Endothelial cell of umbilical vein (primary cell): ENCODE measurements at regions of chr20 and their contacts with region 1.

Region 1: DNA sequence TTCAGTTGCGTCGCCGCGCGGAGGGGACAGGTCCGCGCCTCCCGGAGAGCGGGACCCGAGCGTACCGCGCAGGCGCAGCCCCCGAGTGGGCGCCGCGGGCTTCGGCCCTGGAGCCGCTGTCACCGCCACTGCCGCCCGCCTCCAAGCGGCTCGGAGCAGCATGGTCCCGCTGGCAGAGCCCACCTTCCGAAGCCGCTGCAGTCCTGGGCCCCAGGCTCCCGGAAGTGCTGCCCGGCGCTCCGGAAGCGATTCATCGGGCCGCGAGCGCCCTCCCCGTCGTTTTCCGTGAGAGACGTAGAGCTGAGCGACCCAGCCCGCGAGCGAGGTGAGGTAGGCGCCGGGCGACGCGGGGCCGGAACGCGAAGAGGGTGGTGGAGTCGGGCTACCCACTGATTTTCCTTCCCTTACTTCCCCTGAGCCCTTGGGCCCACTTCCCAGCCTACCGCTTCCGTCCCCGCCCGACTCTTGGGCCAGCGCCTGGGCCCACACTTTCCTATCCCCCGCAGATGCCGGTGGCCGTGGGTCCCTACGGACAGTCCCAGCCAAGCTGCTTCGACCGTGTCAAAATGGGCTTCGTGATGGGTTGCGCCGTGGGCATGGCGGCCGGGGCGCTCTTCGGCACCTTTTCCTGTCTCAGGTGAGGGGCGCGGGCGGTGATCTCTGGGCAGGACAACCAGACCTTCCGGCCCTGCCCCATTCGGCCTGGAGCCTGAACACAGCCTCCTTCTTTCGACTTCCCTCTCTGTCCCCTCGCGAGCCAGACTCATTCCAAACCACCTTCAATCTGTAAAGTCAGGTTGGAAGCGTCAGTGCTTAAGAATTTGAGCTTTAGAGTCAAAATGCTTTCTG is at the starts of genes NFS1 and ROMO1:
- DNase-seq: peak; percentile 89
- H3K4me3 ChIP-seq: peak within 1 kb of the TSS; percentile 44 to 91 (median 87)
- H3K27ac ChIP-seq: peak within 1 kb of the TSS; percentile 65
- H3K4me1 ChIP-seq: peaks cover 17% of the 10 kb centered on the region
- H3K27me3 ChIP-seq: no peaks in the 10 kb centered on the region
- CTCF ChIP-seq: peak; percentile 14 to 43
- POLR2A ChIP-seq: peak; percentile 95
- total RNA-seq, gene NFS1: 24.0 and 25.1 TPM in 2 replicates
- total RNA-seq, gene ROMO1: 169 and 174 TPM in 2 replicates

Region 2: DNA sequence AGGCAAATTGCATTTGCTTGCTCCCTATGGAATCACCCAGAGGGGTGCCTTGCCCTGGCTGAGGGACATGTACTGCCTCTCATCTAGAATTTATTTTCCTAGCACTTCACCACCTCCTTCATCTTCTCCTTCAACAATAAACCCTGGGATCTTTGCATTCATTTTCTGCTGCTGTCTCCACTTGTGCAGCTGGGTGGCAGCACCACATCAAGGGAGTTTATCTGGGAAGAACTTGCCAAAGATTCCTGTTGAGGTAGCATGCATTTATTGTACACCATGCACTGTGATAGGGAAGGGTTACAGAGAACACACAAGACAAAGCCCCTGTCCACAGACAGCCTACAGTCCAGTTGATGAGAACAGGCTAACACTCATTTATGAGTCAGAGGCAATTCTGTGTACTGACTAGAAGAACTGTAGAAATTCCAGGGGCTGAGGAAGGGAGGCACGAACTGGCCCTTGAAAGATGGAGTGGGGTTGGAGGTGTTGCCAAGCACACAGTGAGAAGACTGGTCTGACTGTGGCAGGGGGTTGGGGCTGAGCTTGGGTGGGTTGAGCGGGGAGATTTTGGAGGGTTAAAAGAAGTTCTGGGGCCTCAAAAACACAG is 187.4 kb before region 1 on chr20:
- CTCF ChIA-PET with region 1: interaction called, 3 read pairs
- POLR2A ChIA-PET with region 1: no interaction called
- dilution Hi-C with region 1: no loop called
- intact Hi-C with region 1: loop called (anchors 10 kb)
- DNase-seq: peak; percentile 56
- H3K4me3 ChIP-seq: no peak overlapping the region
- H3K27ac ChIP-seq: no peak overlapping the region
- H3K4me1 ChIP-seq: no peaks in the 10 kb centered on the region
- H3K27me3 ChIP-seq: no peaks in the 10 kb centered on the region
- CTCF ChIP-seq: peak; percentile 41 to 52
- POLR2A ChIP-seq: no peak

Region 3: DNA sequence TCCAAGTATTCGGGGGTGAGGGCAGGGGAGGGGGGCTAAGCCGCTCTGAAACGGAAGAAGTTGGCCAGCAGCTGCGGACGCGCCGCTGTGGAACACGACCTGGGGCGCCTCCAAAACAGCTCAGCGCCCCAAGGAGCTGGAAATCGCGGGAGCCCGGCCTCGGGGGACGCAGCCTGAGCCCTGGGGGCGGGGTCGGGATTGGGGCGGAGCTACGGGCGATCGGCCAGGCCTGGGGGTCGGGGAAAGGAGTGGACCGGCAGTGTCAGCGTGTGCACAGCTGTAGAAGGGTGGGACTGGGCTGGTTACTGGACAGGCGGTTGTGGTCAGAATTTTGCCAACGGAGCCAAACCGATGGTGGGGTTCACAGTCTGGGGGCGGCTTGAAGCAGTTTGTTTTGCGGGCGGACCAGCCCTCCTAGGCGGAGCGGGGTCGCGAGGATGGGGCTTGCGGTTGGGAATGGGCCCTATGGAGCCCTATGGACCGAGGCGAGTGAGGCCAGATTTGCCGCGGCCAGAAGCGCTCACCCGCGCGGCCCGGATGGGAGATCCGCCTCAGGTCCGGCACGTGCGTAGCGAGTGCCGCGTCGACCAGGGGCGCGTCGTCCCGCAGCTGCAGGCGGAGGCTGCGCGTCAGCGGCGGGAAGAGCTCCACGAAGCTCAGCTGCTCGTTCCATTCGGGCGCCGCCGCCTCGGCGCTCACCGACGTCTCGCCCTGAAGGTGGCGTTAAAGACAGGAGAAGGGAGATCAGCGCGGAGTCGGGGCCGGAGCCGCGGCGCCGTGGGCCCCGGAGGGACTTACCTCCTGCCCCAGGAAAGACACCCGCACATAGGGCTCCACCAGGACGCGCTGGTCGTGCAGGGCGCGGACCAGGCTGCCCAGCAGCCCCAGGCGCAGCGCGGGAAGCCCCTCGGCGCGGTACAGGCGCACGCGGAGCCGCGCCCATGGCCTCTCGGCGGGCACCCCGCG is 98.1 kb before region 1 on chr20:
- CTCF ChIA-PET with region 1: interaction called, 3 read pairs
- POLR2A ChIA-PET with region 1: no interaction called
- dilution Hi-C with region 1: no loop called
- intact Hi-C with region 1: loop called (anchors 5 kb)
- DNase-seq: peak; percentile 79
- H3K4me3 ChIP-seq: peak overlapping the region; percentile 1 to 21 (median 2)
- H3K27ac ChIP-seq: no peak overlapping the region
- H3K4me1 ChIP-seq: peaks cover 8% of the 10 kb centered on the region
- H3K27me3 ChIP-seq: peaks cover 13 to 15% of the 10 kb centered on the region in 2 experiments
- CTCF ChIP-seq: peak; percentile 26 to 52
- POLR2A ChIP-seq: no peak

Region 4: DNA sequence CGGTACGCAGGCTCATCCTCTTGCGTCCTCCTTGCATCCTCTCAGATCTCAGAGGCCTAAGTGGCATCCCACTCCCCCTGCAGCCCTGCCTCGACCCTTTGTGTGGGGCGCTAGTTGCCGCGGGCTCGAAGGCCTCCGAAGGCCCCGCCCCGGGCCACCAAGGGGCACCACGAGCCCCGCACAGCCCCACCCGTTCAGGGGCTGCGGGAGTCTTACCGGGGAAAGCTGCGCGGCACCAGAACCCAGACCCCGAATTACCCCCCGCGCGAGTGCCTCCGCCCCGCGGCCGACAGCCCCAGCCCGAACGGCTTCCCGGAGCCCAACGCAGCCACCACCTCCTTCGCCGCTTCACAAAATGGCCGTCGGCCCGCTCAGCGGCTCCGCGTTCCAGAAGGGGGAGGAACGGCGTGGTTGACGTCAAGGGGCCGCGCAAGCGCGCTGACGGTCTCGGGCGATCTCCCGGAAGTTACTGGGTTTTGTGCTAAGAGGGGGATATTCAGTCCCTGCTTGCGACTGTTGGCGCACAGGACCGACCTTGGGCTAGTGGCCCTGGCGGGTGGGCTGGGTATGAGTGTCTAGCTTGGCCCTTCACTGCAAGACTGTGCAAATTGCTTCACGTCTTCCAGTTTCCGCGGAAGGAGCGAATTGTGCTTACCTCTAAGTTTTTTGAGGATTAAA is 34.7 kb before region 1 on chr20 and contains the starts of genes CPNE1 and RBM12:
- CTCF ChIA-PET with region 1: no interaction called
- POLR2A ChIA-PET with region 1: interaction called, 3 read pairs
- dilution Hi-C with region 1: no loop called
- intact Hi-C with region 1: loop called (anchors 2 kb)
- DNase-seq: peak; percentile 94
- H3K4me3 ChIP-seq: peak within 1 kb of the TSS; percentile 13 to 81 (median 78)
- H3K27ac ChIP-seq: peak within 1 kb of the TSS; percentile 33
- H3K4me1 ChIP-seq: peaks cover 19% of the 10 kb centered on the region
- H3K27me3 ChIP-seq: no peaks in the 10 kb centered on the region
- CTCF ChIP-seq: peak in 1 of 2 donors; percentile 6
- POLR2A ChIP-seq: peak; percentile 95
- total RNA-seq, gene CPNE1: 239 and 244 TPM in 2 replicates
- total RNA-seq, gene RBM12: 98.0 and 105 TPM in 2 replicates